Activated naive CD4-positive, alpha-beta T cell treated with anti-CD3 and anti-CD28 coated beads for 36 hours (primary cell): ENCODE measurements at regions of chr13 and their contacts with region 1.

Region 1: DNA sequence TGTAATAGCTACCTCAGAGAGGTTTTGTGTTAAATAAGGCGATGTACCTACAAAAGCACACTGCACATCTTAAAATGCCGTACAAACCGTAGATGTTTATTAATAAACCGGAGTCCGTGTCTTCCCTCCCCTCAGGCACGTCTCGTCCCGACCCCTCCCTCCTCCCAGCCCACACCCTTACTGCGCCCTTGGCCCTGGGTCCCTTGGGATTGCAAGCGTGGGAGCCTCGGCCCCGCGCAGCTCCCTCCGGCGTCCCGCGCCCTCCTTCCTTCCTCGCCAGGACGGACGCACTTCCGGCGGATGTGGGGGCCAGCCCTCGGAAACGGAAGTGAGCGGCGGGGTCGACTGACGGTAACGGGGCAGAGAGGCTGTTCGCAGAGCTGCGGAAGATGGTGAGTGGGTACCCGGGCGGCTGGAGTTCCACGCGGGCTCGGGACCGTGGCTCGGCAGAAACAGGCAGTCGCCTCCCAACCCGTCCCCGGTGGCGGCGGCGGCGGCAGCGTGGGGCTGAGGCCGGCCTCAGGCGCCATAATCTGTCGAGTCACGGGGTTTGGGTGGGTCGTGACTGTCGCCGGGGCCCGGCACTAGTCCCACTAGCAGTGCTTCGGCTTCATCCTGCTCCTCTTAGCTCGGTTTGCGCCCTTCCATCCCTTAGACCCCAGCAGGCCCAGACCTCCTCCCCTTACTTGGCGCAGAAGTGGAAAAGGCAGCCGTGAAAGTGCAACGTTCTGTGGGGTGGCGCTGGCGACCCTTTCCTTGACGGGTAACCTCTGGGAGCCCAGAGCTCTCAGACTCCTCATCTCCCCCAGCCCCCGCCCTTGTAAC is at the start of gene POMP:
- DNase-seq: peak; percentile 95
- H3K4me3 Mint-ChIP-seq: peak within 1 kb of the TSS; percentile 97
- H3K27ac Mint-ChIP-seq: peak within 1 kb of the TSS; percentile 98
- H3K4me1 Mint-ChIP-seq: peaks cover 56% of the 10 kb centered on the region
- H3K27me3 Mint-ChIP-seq: no peaks in the 10 kb centered on the region
- total RNA-seq, gene POMP: 106 to 108 TPM

Region 2: GRCh38 chr13:28324181-28324789 is 334.7 kb before region 1 on chr13:
- CTCF ChIA-PET with region 1: no interaction called
- intact Hi-C with region 1: loop called (anchors 1 kb)
- DNase-seq: peak; percentile 79
- H3K4me3 Mint-ChIP-seq: no peak overlapping the region
- H3K27ac Mint-ChIP-seq: no peak overlapping the region
- H3K4me1 Mint-ChIP-seq: no peaks in the 10 kb centered on the region
- H3K27me3 Mint-ChIP-seq: no peaks in the 10 kb centered on the region

Region 3: GRCh38 chr13:28697441-28697840 is 38.4 kb after region 1 on chr13:
- CTCF ChIA-PET with region 1: no interaction called
- intact Hi-C with region 1: no loop called
- DNase-seq: no peak
- H3K4me3 Mint-ChIP-seq: no peak overlapping the region
- H3K27ac Mint-ChIP-seq: no peak overlapping the region
- H3K4me1 Mint-ChIP-seq: no peaks in the 10 kb centered on the region
- H3K27me3 Mint-ChIP-seq: no peaks in the 10 kb centered on the region

Region 4: DNA sequence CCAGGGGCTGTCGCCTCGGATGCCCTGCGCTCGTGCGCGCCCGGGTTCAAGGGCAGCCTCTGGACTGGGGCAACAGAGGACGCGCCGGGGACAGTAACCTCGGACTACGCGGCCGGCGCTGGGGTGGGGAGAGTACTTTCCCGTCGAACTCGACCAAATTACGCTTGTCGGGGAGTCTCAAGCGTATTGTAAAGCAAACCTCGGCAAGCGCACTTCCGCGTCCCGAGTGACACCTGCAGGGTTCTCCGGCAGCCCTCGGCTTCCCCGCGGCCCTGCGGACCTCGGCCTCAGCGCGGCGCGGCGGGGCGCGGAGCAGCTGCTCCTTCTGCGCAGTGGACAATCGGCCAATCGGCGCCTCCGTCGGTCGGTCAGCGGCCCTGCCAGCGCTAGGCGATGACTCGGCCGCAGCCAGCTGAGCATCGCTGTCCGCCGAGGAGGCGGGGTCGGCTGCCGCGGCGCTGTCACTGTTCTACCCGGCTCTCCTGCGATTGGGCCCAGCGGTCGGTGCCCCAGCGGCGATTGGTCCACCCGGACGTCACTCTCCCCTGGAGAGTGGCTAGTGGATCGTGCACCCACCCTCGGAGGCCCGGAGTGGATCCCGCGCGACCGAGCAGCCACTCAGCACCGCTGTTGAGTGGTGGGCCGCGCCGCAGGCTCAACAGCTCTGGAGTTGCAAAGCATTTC is 59.7 kb after region 1 on chr13 and contains the start of gene SLC46A3:
- CTCF ChIA-PET with region 1: no interaction called
- intact Hi-C with region 1: loop called (anchors 1 kb)
- DNase-seq: peak; percentile 98
- H3K4me3 Mint-ChIP-seq: peak within 1 kb of the TSS; percentile 94
- H3K27ac Mint-ChIP-seq: peak within 1 kb of the TSS; percentile 86
- H3K4me1 Mint-ChIP-seq: peaks cover 22% of the 10 kb centered on the region
- H3K27me3 Mint-ChIP-seq: no peaks in the 10 kb centered on the region
- total RNA-seq, gene SLC46A3: 2.2 to 3.2 TPM